ENCODE measurements at regions of chr11 and their contacts with region 1.

Region 1: DNA sequence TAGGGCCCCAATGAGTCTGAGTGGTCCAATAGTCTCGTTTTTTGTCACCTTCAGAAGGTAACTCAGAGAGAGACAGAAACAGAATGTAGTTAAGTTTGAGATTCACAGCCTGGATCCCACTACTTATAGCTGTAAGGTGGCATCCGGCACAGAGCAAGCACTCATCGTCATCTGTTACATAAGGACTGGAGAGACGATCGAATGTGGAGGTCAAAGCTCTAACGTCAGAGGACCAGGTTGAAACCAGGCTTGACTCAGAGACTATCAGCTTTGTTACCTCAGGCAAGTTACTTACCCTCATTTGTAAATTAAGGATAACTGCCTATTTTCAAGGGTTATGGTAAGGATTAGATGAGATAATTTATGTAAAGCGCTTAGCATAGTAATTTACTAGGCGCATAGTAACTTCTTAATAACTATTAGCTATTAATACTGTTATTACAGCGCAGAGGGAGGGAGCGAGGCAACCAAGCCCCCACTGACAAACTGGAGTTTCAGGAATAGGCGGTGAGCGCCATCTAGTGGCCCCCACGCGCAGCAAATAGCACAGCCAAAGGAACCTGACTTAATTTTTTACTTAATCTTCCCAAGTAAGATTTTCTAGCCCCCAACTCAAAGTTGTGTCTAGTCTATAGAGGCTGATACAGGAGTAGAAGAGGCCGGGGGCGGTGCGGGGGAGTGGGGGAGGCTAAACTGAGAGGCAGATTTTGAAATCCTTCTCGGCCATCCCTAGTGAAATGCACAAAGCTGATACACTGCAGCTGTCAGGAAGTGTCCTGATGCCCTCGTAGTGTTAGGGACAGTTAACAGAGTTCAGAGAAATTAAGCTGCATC is 29.0 kb upstream of the API5 start:
- DNase-seq: peak; percentile 52
- H3K4me3 Mint-ChIP-seq: no peak overlapping the region
- H3K27ac Mint-ChIP-seq: no peak overlapping the region
- H3K4me1 Mint-ChIP-seq: no peaks in the 10 kb centered on the region
- H3K27me3 Mint-ChIP-seq: peaks cover 5% of the 10 kb centered on the region

Region 2: DNA sequence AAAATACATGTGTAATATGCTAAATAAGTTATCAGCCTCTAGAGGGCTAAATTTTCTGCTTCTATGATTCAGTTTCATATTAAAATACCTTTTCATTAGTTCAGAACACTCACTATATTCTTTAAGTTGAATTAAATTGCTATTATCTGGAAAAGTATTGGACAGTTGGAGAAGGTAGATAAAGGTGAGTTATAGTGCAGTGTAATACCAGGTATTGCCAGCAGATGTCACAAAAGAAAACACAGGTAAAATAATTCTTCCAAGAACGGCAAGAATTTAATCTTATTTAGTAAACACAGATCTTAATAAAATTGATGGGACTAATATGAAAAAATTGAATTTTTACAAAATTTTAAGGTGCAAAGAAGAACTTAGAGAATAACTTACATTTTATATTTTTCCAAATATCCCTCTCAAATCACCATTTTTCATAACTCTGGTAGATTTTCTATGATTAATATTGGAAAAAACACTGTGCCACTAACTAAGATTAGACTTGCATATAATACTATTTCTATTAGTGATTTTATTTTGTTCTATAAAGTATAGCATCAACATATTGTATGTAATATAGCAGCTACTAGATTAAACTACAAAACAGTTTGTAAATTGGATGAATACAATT is 1821.7 kb before region 1 on chr11:
- CTCF ChIA-PET with region 1: interaction called, 9 read pairs
- intact Hi-C with region 1: loop called (anchors 1 kb)
- DNase-seq: no peak
- H3K4me3 Mint-ChIP-seq: no peak overlapping the region
- H3K27ac Mint-ChIP-seq: no peak overlapping the region
- H3K4me1 Mint-ChIP-seq: no peaks in the 10 kb centered on the region
- H3K27me3 Mint-ChIP-seq: peaks cover 12% of the 10 kb centered on the region

Region 3: GRCh38 chr11:42524534-42525227 is 758.1 kb before region 1 on chr11:
- CTCF ChIA-PET with region 1: no interaction called
- intact Hi-C with region 1: loop called (anchors 10 kb)
- DNase-seq: peak; percentile 49
- H3K4me3 Mint-ChIP-seq: no peak overlapping the region
- H3K27ac Mint-ChIP-seq: no peak overlapping the region
- H3K4me1 Mint-ChIP-seq: no peaks in the 10 kb centered on the region
- H3K27me3 Mint-ChIP-seq: no peaks in the 10 kb centered on the region

Region 4: DNA sequence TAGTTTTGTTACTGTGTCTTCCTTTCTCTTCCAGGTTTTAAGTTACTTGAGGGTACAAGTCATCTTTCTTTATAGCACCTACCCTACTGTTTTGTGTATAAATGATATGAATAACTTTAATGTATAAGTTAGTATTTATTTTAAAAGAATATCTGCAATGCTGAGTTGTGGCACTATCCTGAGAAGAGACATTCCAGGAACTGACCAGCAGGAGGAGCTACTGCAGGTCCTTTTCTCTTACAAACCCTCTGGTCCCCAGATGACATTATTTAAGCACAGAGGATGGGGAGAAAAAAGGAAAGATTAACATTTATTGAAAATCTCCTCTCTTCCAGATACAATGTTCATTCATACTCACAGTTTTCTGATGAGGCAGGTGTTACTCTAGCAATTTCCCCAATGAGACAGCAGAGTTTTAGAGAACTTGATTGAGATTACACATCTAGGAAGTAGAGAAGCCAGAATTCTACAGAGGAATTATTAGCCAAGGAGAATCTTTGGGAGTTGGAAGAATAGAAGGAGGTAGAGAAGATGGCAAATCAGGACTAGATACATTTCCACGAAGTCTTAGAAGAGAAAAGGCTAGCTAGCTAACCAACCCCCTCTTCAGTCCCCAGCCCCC is 512.3 kb before region 1 on chr11:
- CTCF ChIA-PET with region 1: interaction called, 5 read pairs
- intact Hi-C with region 1: loop called (anchors 1 kb)
- DNase-seq: peak; percentile 16
- H3K4me3 Mint-ChIP-seq: no peak overlapping the region
- H3K27ac Mint-ChIP-seq: no peak overlapping the region
- H3K4me1 Mint-ChIP-seq: no peaks in the 10 kb centered on the region
- H3K27me3 Mint-ChIP-seq: no peaks in the 10 kb centered on the region

Region 5: GRCh38 chr11:43223026-43223425 is 59.8 kb before region 1 on chr11:
- CTCF ChIA-PET with region 1: no interaction called
- intact Hi-C with region 1: no loop called
- DNase-seq: no peak
- H3K4me3 Mint-ChIP-seq: no peak overlapping the region
- H3K27ac Mint-ChIP-seq: no peak overlapping the region
- H3K4me1 Mint-ChIP-seq: no peaks in the 10 kb centered on the region
- H3K27me3 Mint-ChIP-seq: no peaks in the 10 kb centered on the region

Measured in activated naive CD4-positive, alpha-beta T cell treated with anti-CD3 and anti-CD28 coated beads for 36 hours (primary cell).